Esophagus muscularis mucosa (tissue), 4 donors: ENCODE measurements at regions of chr6 and their contacts with region 1.

Region 1: DNA sequence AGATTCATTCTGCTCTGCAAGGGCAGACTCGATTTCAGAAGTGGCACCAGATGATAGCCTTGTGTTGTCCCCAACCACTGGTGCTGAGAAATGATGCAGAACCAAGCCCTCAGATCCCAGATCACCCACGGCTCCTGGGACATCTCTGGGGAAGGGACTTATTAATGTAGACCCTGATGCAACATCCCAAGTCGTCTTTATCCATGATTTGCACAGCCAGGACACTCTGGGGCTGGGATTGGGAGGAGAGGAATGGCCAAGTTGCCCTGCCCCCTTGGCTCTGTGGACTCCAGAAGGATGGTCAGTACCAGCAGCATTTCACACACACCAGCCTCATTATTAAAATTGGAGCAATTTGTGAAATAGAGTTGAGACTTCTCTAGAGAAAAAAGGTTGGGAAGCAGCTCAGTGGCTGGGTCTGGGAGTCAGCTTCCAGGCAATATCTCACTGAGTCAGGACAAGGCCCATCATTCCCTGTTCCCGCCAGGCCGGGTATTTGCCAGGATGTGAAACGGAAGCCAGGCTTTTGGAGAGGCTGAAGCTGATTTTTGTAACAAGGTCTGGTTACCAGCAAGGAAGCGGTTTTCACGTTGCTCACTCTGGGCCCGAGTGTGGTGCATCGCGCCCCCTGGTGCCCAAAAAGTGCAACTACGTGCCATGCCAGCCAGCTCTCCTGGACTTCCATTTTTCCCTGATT is 67.4 kb downstream of the ZBTB2 start:
- DNase-seq: peak; percentile 96
- H3K4me3 ChIP-seq: peak overlapping the region in 2 of 4 donors; percentile 13 to 27
- H3K27ac ChIP-seq: peak overlapping the region; percentile 52 to 84 (median 76)
- H3K4me1 ChIP-seq: peaks cover 18 to 32% (median 28%) of the 10 kb centered on the region in 4 donors
- H3K27me3 ChIP-seq: no peaks in the 10 kb centered on the region
- CTCF ChIP-seq: peak in 2 of 3 experiments; percentile 96 to 99
- EP300 ChIP-seq: peak; percentile 83
- POLR2A ChIP-seq: no peak

Region 2: DNA sequence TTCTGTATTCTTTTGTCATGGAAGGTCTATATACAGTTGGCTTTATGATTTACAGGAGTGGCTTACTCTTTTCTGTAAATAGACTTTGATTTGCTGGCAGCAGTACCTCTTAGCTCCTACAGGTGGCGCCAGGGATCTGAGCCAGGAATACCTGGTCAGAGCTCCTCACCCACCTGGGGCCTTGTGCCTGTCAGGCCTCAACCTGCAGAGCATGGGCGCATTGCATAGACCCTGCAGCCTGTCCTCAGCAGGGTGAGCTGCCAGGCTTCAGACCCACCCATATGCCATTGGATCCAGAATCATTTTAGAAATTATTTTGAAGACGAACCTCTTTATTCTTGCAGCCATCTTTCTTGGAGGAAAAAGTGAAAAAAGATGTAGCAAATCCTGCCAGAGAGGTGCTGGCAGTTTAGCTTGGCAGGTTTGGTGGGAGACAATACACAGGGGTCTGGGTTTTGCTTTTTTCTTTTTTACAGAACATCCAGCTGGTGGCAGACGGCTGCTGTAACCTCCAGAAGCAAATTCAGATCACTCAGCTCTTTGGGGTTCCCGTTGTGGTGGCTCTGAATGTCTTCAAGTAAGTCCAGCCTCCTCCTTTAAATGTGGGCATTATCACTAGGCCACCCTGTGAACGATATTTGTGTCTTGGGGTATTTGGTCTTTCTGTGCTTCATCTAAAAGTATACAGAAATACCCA is 309.4 kb before region 1 on chr6:
- intact Hi-C with region 1: loop called (anchors 2 kb)
- DNase-seq: no peak
- H3K4me3 ChIP-seq: peak overlapping the region in 1 of 4 donors; percentile 28
- H3K27ac ChIP-seq: peak overlapping the region in 1 of 4 donors; percentile 0
- H3K4me1 ChIP-seq: peaks cover 3 to 18% (median 5%) of the 10 kb centered on the region in 4 donors
- H3K27me3 ChIP-seq: no peaks in the 10 kb centered on the region
- CTCF ChIP-seq: peak; percentile 95 to 99 (median 96)
- EP300 ChIP-seq: no peak
- POLR2A ChIP-seq: no peak

Region 3: DNA sequence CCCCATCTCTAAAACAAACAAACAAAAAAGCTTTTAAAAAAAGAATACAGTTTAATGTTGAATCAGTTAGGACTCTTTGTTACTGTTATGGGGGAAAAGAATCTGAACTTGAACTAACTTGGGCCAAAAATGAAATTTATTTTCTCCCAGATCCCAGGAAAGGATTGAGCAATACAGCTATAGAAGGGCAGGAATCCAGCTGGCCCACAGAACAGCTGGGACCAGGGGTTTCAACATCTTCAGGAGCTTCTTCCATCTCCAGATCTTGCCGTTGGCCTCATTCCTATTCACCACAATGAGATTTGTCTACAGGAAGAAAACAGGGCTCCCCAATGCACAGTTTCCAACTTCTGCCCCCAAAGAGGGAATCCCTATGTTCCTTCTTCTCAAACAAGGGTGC is 127.4 kb before region 1 on chr6:
- intact Hi-C with region 1: no loop called
- DNase-seq: no peak
- H3K4me3 ChIP-seq: no peak overlapping the region
- H3K27ac ChIP-seq: peak overlapping the region in 2 of 4 donors; percentile 28 to 40
- H3K4me1 ChIP-seq: peaks cover 0 to 4% (median 0%) of the 10 kb centered on the region in 4 donors
- H3K27me3 ChIP-seq: no peaks in the 10 kb centered on the region
- CTCF ChIP-seq: no peak
- EP300 ChIP-seq: no peak
- POLR2A ChIP-seq: no peak

Region 4: DNA sequence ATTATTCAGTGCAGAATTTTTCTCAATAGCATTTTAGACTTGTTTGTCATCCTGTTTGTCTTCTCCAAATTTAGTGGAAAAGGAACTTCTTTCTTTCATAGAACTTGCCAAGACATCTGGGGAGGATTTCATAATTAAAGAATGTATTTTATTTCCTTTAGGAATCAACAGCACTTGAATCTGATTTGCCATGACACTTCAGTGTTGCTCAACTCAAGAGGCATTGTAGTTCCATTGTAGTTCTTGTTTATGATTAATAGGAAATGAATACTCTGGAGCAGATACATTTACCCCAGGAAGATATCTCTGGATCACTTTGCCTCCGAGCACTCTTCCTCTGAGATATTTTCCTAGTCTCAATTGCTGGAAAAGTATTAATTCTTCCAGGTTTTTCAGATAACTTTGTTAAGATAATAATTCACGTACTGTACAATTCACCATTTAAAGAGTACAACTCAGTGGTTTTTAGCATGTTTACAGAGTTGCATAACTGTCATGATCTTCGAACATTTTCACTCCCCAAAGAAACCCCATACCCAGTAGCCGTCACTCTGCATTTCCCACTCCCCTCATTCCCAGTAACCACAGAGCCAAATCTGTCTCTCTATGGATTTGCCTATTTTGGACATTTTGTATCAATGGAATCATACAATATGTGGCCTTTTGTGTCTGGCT is 54.5 kb before region 1 on chr6:
- intact Hi-C with region 1: no loop called
- DNase-seq: no peak
- H3K4me3 ChIP-seq: no peak overlapping the region
- H3K27ac ChIP-seq: peak overlapping the region; percentile 5 to 50 (median 28)
- H3K4me1 ChIP-seq: peaks cover 0 to 44% (median 28%) of the 10 kb centered on the region in 4 donors
- H3K27me3 ChIP-seq: no peaks in the 10 kb centered on the region
- CTCF ChIP-seq: no peak
- EP300 ChIP-seq: no peak
- POLR2A ChIP-seq: no peak